ENCODE measurements at regions of chr2 and their contacts with region 1.

Region 1: GRCh38 chr2:170973492-170974303 is 44.6 kb downstream of the GORASP2 start:
- DNase-seq: peak; percentile 83
- ATAC-seq: peak; percentile 76
- H3K4me3 ChIP-seq: peak overlapping the region; percentile 62 to 83 (median 64)
- H3K27ac ChIP-seq: peak overlapping the region; percentile 92
- H3K4me1 ChIP-seq: peaks cover 58% of the 10 kb centered on the region
- H3K27me3 ChIP-seq: no peaks in the 10 kb centered on the region
- CTCF ChIP-seq: peak; percentile 92
- EP300 ChIP-seq: peak; percentile 37 to 70; a peak in 3 of 4 replicates
- POLR2A ChIP-seq: peak; percentile 61
- RAD21 ChIP-seq: peak; percentile 100

Region 2: GRCh38 chr2:170928824-170929685 is 44.6 kb before region 1 on chr2 and contains the start of gene GORASP2:
- CTCF ChIA-PET with region 1: interaction called, 4 read pairs
- POLR2A ChIA-PET with region 1: interaction called, 39 read pairs
- in situ Hi-C with region 1: no loop called
- intact Hi-C with region 1: loop called (anchors 5 kb)
- DNase-seq: peak; percentile 100
- ATAC-seq: peak; percentile 94
- H3K4me3 ChIP-seq: peak within 1 kb of the TSS; percentile 83 to 97 (median 92)
- H3K27ac ChIP-seq: peak within 1 kb of the TSS; percentile 94
- H3K4me1 ChIP-seq: peaks cover 56% of the 10 kb centered on the region
- H3K27me3 ChIP-seq: no peaks in the 10 kb centered on the region; a peak in 1 of 5 replicates
- CTCF ChIP-seq: peak; percentile 97
- EP300 ChIP-seq: peak in 1 of 2 experiments; percentile 67; a peak in 3 of 4 replicates
- POLR2A ChIP-seq: peak; percentile 79 to 90
- RAD21 ChIP-seq: peak; percentile 77
- total RNA-seq, gene GORASP2: 97.3 and 103 TPM in 2 replicates

Region 3: GRCh38 chr2:171008550-171009205 is 35.0 kb after region 1 on chr2:
- CTCF ChIA-PET with region 1: no interaction called
- POLR2A ChIA-PET with region 1: no interaction called
- in situ Hi-C with region 1: no loop called
- intact Hi-C with region 1: no loop called
- DNase-seq: no peak
- ATAC-seq: no peak
- H3K4me3 ChIP-seq: no peak overlapping the region
- H3K27ac ChIP-seq: no peak overlapping the region
- H3K4me1 ChIP-seq: no peaks in the 10 kb centered on the region
- H3K27me3 ChIP-seq: no peaks in the 10 kb centered on the region
- CTCF ChIP-seq: no peak
- EP300 ChIP-seq: no peak
- POLR2A ChIP-seq: no peak
- RAD21 ChIP-seq: no peak

Region 4: DNA sequence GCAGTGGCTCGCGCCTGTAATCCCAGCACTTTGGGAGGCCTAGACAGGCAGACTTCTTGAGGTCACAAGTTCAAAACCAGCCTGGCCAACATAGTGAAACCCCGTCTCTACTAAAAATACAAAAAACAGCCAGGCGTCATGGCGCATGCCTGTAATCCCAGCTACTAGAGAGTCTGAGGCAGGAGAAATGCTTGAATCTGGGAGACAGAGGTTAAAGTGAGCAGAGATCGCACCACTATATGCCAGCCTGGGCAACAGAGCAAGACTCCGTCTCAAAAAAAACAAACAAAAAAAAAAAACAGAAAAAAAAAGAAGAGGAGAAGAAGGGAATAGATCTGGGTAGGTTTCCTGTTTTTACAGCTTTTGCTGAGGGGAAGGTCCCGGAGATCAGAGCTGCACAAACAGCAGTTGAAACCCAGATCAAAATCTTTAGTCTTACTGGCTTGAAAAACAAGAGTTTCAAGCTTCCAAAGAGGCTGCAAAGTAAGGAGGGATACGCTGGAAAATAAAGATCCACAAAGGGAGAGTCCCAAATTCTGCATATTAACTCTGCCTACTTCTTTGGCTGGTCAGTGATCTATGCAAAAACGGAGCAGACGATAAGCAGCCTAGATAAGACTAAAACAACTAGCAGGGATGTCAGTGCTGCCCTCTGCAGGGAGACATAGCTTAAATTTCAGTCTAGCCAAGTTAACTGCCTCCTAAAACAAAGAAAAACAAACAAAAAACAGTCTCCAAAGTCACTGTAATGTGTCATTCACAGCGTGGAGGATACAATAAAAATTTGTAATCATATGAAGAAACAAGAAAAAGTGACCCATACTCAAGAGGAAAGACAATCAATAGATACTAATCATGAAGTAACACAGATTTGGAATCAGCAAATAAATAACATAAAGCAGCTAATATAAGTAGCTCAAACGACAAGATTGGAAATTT is 112.9 kb after region 1 on chr2:
- CTCF ChIA-PET with region 1: no interaction called
- POLR2A ChIA-PET with region 1: interaction called, 8 read pairs
- in situ Hi-C with region 1: no loop called
- intact Hi-C with region 1: loop called (anchors 5 kb)
- DNase-seq: peak; percentile 65
- ATAC-seq: peak; percentile 79
- H3K4me3 ChIP-seq: peak overlapping the region in 1 of 3 experiments; percentile 3; a peak in 1 of 6 replicates
- H3K27ac ChIP-seq: peak overlapping the region; percentile 0
- H3K4me1 ChIP-seq: peaks cover 61% of the 10 kb centered on the region
- H3K27me3 ChIP-seq: no peaks in the 10 kb centered on the region
- CTCF ChIP-seq: peak; percentile 78
- EP300 ChIP-seq: no peak
- POLR2A ChIP-seq: no peak
- RAD21 ChIP-seq: peak; percentile 43; the same call in 1 of the 2 replicates

Region 5: GRCh38 chr2:171244970-171245782 is 271.5 kb after region 1 on chr2:
- CTCF ChIA-PET with region 1: interaction called, 4 read pairs
- POLR2A ChIA-PET with region 1: no interaction called
- in situ Hi-C with region 1: no loop called
- intact Hi-C with region 1: loop called (anchors 10 kb)
- DNase-seq: no peak
- ATAC-seq: peak; percentile 39; the same call in 2 of the 3 replicates
- H3K4me3 ChIP-seq: no peak overlapping the region
- H3K27ac ChIP-seq: no peak overlapping the region
- H3K4me1 ChIP-seq: peaks cover 7% of the 10 kb centered on the region; the same call in 1 of the 2 replicates
- H3K27me3 ChIP-seq: no peaks in the 10 kb centered on the region
- CTCF ChIP-seq: peak; percentile 55
- EP300 ChIP-seq: no peak
- POLR2A ChIP-seq: no peak
- RAD21 ChIP-seq: no peak

Region 6: DNA sequence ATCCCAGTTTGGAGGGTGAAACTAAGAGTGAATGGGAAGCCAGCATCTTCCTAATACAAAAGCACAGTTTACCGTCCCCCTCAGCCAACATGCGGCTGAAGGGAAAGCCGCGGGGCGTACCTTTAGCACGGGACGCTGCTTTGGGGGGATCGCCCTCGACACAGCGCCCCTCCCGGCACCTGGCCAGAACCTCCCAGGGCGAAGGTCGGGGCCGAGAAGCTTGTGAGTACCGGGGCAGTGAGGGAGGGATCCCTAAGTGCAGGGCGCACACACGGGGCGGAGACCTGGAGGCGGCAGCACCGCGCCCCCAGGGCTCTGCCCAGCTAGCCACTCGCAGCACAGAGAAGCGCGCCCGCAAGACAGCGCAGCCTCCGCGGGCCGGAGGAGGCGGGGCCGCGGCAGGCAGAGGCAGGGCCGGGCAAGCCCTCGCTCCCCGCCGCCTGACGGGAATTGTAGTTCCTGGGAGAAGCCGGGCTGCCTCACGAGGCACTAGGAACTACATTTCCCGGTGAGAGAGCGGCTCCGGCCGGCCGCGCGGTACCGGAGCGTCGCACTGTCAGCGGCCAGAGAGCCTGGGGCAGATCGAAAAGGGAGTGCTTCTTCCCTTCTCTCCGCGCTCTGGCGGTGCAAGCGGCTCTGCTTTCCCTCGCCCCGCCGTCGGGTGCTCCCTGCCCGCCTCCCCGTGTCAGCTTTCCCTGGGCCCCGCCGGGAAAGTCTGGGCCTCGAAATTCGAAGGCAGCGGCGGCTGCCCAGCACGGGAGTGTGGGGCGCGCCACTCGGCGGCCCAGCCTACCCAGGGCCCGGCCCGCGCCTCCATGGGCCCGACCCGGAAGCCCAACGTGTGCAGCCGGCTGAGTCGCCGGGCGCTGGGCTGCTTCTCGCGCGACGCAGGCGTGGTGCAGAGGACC is 460.3 kb after region 1 on chr2 and contains the starts of genes DCAF17 and METTL8:
- CTCF ChIA-PET with region 1: no interaction called
- POLR2A ChIA-PET with region 1: interaction called, 21 read pairs
- in situ Hi-C with region 1: no loop called
- intact Hi-C with region 1: loop called (anchors 1 kb)
- DNase-seq: peak; percentile 97
- ATAC-seq: peak; percentile 97
- H3K4me3 ChIP-seq: peak within 1 kb of the TSS; percentile 78 to 90 (median 88)
- H3K27ac ChIP-seq: peak within 1 kb of the TSS; percentile 87
- H3K4me1 ChIP-seq: peaks cover 75% of the 10 kb centered on the region
- H3K27me3 ChIP-seq: no peaks in the 10 kb centered on the region; a peak in 1 of 5 replicates
- CTCF ChIP-seq: peak; percentile 96
- EP300 ChIP-seq: peak; percentile 17 to 63; a peak in 2 of 4 replicates
- POLR2A ChIP-seq: peak; percentile 81 to 82
- RAD21 ChIP-seq: peak; percentile 62
- total RNA-seq, gene DCAF17: 30.0 and 35.3 TPM in 2 replicates
- total RNA-seq, gene METTL8: 68.2 and 89.8 TPM in 2 replicates

Measured in HepG2 (cell line).